Pancreas (tissue), 10 donors: ENCODE measurements at regions of chr5 and their contacts with region 1.

Region 1: GRCh38 chr5:134503088-134503946 is 22.2 kb upstream of the JADE2 start:
- DNase-seq: peak in 5 of 6 donors; percentile 42 to 74 (median 55)
- ATAC-seq: peak in 3 of 4 donors; percentile 34 to 65 (median 35)
- H3K4me3 ChIP-seq: no peak overlapping the region
- H3K27ac ChIP-seq: peak overlapping the region; percentile 33 to 88 (median 66)
- H3K4me1 ChIP-seq: peaks cover 19 to 39% (median 36%) of the 10 kb centered on the region in 3 donors
- H3K27me3 ChIP-seq: no peaks in the 10 kb centered on the region
- CTCF ChIP-seq: no peak

Region 2: GRCh38 chr5:134420343-134420742 is 83.0 kb before region 1 on chr5:
- intact Hi-C with region 1: loop called in 1 of 3 experiments (anchors 10 kb)
- DNase-seq: no peak
- ATAC-seq: no peak
- H3K4me3 ChIP-seq: no peak overlapping the region
- H3K27ac ChIP-seq: no peak overlapping the region
- H3K4me1 ChIP-seq: peaks cover 6 to 17% (median 15%) of the 10 kb centered on the region in 3 donors
- H3K27me3 ChIP-seq: no peaks in the 10 kb centered on the region
- CTCF ChIP-seq: no peak

Region 3: GRCh38 chr5:134451936-134452505 is 51.3 kb before region 1 on chr5:
- intact Hi-C with region 1: no loop called
- DNase-seq: peak in 1 of 6 donors; percentile 54
- ATAC-seq: peak; percentile 53 to 79 (median 74)
- H3K4me3 ChIP-seq: no peak overlapping the region
- H3K27ac ChIP-seq: no peak overlapping the region
- H3K4me1 ChIP-seq: no peaks in the 10 kb centered on the region
- H3K27me3 ChIP-seq: no peaks in the 10 kb centered on the region
- CTCF ChIP-seq: no peak